PC-9 (cell line): ENCODE measurements at regions of chr12 and their contacts with region 1.

Region 1: GRCh38 chr12:92570056-92570753 is 132.6 kb upstream of the PLEKHG7 start:
- DNase-seq: peak; percentile 54 to 61
- H3K4me3 ChIP-seq: no peak overlapping the region
- H3K27ac ChIP-seq: no peak overlapping the region
- H3K4me1 ChIP-seq: 0 out of 2 replicates have a peak, but pooled peaks cover 5% of the 10 kb centered on the region
- H3K27me3 ChIP-seq: no peaks in the 10 kb centered on the region
- CTCF ChIP-seq: peak; percentile 93

Region 2: GRCh38 chr12:91382081-91382543 is 1188.1 kb before region 1 on chr12:
- CTCF ChIA-PET with region 1: no interaction called
- POLR2A ChIA-PET with region 1: no interaction called
- intact Hi-C with region 1: loop called (anchors 1 kb)
- DNase-seq: peak; percentile 51 to 67
- H3K4me3 ChIP-seq: no peak overlapping the region
- H3K27ac ChIP-seq: no peak overlapping the region
- H3K4me1 ChIP-seq: peaks cover 9% of the 10 kb centered on the region
- H3K27me3 ChIP-seq: no peaks in the 10 kb centered on the region
- CTCF ChIP-seq: peak; percentile 96

Region 3: DNA sequence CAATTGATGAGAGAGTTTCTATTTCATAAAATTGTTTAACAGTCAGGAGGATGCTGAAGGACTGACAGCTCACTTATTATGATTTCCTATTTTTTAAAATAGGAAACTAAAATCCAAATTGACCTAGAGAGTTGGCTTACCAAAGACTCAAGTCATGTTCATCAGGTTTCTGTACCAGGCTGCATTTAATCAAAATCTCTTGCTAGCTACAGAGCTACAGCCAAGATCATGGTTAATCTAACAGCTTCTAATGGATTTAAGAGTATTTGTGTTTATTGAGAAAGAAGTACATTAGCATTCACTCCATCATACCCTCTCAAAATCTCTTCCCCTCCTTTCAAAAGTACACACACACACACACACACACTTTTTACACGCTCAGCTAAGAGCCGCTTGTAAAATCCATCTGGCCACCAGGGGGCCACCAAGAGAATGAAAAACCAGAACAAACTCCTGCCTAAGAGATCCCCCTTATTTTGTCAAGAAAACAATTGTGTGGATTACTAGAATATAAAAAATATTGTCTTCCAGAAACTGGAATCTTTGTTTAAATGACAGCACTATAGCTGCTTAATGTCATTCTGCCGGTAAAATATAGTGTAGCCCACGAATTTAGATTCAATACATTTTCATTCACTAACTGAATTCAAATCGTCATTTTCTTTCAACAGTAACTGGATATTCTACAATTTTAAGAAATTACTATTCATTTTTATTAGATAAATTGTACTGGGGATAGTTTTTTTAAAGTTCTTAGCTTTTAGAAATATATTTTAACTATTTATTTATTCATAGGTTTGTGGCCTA is 758.5 kb before region 1 on chr12:
- CTCF ChIA-PET with region 1: no interaction called
- POLR2A ChIA-PET with region 1: no interaction called
- intact Hi-C with region 1: loop called (anchors 5 kb)
- DNase-seq: peak in 1 of 2 experiments; percentile 48
- H3K4me3 ChIP-seq: no peak overlapping the region
- H3K27ac ChIP-seq: no peak overlapping the region
- H3K4me1 ChIP-seq: no peaks in the 10 kb centered on the region
- H3K27me3 ChIP-seq: no peaks in the 10 kb centered on the region
- CTCF ChIP-seq: peak; percentile 83

Region 4: DNA sequence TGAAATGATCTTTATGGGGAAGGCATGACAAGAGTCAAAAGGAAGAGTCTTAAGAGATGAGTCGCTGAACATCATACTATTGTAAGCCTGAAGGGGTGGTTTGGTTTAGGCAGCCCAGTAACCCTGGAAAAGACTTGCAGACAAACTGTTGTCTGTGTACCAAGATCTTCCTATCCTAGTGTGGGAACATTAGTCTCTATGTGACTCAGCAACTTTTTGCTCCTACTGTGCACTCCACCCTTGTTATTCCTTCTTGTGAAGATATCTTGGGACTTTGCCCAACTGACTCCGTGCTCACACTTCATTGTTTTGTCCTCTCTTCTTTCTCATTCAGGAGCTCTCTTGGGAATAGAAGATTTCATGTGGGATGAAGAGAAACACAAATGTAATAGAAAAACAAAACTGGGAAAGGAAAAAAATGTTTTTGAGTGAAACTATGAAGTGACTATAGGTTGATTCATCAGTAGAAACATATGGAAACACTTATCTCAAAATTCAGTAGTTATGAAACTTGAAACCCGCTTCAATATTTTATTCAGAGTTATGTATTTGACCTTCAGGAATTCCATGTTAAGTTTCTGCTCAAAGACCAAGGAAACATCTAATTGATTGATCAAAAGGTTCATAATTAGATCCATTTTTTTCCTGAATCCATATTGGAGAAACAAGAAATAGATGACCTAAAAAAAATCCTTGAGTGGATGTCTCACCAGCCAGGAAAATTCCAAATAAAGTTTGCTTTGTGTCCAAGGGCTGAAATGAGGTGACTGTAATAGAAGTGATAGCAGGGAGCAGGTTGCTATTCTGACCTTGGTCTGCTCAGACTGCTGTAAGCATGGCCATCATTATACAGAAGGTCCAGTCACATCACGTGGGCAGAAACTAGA is 491.8 kb before region 1 on chr12:
- CTCF ChIA-PET with region 1: no interaction called
- POLR2A ChIA-PET with region 1: no interaction called
- intact Hi-C with region 1: loop called (anchors 1 kb)
- DNase-seq: peak; percentile 28 to 69
- H3K4me3 ChIP-seq: no peak overlapping the region
- H3K27ac ChIP-seq: peak overlapping the region; percentile 96
- H3K4me1 ChIP-seq: peaks cover 42% of the 10 kb centered on the region
- H3K27me3 ChIP-seq: no peaks in the 10 kb centered on the region
- CTCF ChIP-seq: no peak

Region 5: GRCh38 chr12:92270521-92270920 is 299.7 kb before region 1 on chr12:
- CTCF ChIA-PET with region 1: no interaction called
- POLR2A ChIA-PET with region 1: no interaction called
- intact Hi-C with region 1: no loop called
- DNase-seq: no peak
- H3K4me3 ChIP-seq: no peak overlapping the region
- H3K27ac ChIP-seq: no peak overlapping the region
- H3K4me1 ChIP-seq: no peaks in the 10 kb centered on the region
- H3K27me3 ChIP-seq: no peaks in the 10 kb centered on the region
- CTCF ChIP-seq: no peak

Region 6: DNA sequence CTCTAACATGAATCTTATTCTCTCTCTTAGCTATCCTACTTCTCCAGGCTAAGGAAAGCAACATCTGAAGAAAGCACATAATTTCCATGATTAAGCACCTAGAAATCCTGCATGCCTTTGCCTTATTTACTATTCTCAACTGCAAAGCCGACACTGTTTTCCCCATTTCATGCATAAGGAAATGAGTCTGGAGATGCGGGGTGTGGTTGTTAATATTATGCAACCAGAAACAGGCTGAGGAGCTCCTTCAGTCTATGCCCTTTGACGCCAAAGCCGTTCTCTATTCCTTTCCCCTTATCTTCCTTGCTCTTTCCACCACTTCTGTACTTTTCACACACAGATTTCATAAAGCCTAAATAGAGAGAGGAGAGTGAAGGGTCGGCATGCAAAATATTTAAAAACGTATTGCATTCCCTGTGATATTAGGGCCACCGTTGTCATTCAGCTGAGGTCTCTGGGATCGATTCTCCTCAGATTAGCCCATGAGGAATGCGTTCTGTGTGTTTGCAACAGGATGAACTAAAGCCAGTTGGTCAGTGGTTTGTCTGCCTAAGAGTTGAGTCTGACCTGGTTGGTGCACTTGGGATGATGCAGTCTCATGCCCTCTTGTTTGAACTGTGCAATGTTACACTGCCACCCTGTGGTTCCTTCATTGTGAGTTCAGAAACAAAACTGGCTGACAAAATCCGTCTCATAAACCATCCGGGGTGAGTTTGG is 79.5 kb after region 1 on chr12:
- CTCF ChIA-PET with region 1: interaction called, 4 read pairs
- POLR2A ChIA-PET with region 1: no interaction called
- intact Hi-C with region 1: loop called (anchors 1 kb)
- DNase-seq: peak; percentile 53 to 54
- H3K4me3 ChIP-seq: no peak overlapping the region
- H3K27ac ChIP-seq: no peak overlapping the region
- H3K4me1 ChIP-seq: peaks cover 15% of the 10 kb centered on the region
- H3K27me3 ChIP-seq: no peaks in the 10 kb centered on the region
- CTCF ChIP-seq: peak; percentile 78